ENCODE measurements at regions of chr22 and their contacts with region 1.

Region 1: DNA sequence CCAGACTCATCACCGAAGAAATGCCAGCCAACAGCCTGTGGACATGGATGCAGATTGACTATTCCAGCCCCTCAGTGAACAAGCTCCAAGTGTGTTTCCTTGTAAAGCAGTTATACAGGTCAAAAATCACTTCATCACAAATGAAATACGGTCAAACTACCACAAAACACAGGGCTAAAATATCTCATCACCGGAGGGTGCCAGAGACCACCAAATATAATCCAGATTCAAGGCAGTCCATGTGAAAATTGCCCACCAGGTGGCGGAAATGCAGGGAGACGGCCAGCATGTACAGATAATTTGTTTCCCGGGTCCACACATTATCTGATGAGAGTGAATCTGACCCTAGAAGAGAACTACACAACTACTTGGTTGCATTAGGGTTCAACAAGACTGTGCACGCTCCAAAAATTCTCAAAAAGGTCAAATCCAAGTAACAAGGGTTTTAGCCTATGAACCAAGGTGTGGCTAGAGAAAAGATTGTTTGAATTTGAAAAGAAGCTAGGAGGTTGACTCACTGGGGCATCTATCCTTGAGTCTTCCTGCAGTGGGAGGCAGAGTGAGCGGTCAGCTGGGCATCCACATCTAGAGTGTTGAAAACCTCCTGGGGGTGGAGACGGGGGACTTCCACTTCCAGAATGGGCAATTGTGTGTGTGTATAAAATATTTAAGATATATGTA is 71.7 kb downstream of the IGLL5 start:
- DNase-seq: peak; percentile 83
- H3K4me3 Mint-ChIP-seq: no peak overlapping the region
- H3K27ac Mint-ChIP-seq: no peak overlapping the region
- H3K4me1 Mint-ChIP-seq: peaks cover 6% of the 10 kb centered on the region
- H3K27me3 Mint-ChIP-seq: peaks cover 57% of the 10 kb centered on the region
- CTCF ChIP-seq: peak; percentile 78

Region 2: GRCh38 chr22:22440188-22440587 is 519.1 kb before region 1 on chr22:
- CTCF ChIA-PET with region 1: no interaction called
- intact Hi-C with region 1: no loop called
- DNase-seq: no peak
- H3K4me3 Mint-ChIP-seq: no peak overlapping the region
- H3K27ac Mint-ChIP-seq: no peak overlapping the region
- H3K4me1 Mint-ChIP-seq: no peaks in the 10 kb centered on the region
- H3K27me3 Mint-ChIP-seq: peaks cover 68% of the 10 kb centered on the region
- CTCF ChIP-seq: no peak

Region 3: DNA sequence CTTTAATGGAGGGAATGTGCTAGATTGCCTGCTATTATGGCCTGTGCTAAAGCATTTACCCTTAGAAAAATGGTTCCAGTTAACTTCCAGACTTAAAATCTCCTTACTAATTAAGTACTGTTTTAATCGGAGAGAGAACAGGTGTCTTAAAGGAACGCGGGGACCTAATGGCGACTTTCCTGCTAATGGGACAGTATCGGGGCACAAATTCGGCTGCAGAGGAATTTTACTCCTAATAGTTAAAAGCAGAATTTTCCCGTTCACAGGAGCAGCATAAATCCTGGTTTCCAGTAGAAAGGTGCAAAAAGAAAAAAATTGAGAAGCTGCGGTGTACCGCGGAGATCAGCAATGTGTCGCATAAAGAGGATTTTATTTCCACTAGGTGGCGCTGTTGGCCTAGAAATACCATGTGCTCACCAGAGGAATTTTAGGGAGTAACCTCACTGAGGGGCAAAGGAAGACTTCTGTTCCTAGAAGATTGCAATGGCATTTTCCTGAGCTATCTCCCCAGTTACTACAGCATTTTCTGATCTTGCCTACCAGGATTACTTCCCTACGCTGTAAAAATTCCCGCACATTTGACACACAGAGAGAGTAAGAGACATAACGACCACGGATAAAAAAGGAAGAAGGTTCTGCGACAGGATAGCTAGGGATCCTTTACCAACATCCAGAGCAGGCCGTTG is 495.3 kb before region 1 on chr22:
- CTCF ChIA-PET with region 1: no interaction called
- intact Hi-C with region 1: loop called (anchors 5 kb)
- DNase-seq: peak; percentile 59
- H3K4me3 Mint-ChIP-seq: no peak overlapping the region
- H3K27ac Mint-ChIP-seq: no peak overlapping the region
- H3K4me1 Mint-ChIP-seq: no peaks in the 10 kb centered on the region
- H3K27me3 Mint-ChIP-seq: peaks cover 76% of the 10 kb centered on the region
- CTCF ChIP-seq: peak; percentile 83

Region 4: GRCh38 chr22:22753526-22754267 is 205.6 kb before region 1 on chr22:
- CTCF ChIA-PET with region 1: interaction called, 15 read pairs
- intact Hi-C with region 1: no loop called
- DNase-seq: peak; percentile 91
- H3K4me3 Mint-ChIP-seq: no peak overlapping the region
- H3K27ac Mint-ChIP-seq: peak overlapping the region; percentile 53
- H3K4me1 Mint-ChIP-seq: peaks cover 19% of the 10 kb centered on the region
- H3K27me3 Mint-ChIP-seq: peaks cover 13% of the 10 kb centered on the region
- CTCF ChIP-seq: peak; percentile 76

Region 5: GRCh38 chr22:23122216-23122957 is 163.1 kb after region 1 on chr22:
- CTCF ChIA-PET with region 1: interaction called, 82 read pairs
- intact Hi-C with region 1: no loop called
- DNase-seq: no peak
- H3K4me3 Mint-ChIP-seq: no peak overlapping the region
- H3K27ac Mint-ChIP-seq: no peak overlapping the region
- H3K4me1 Mint-ChIP-seq: no peaks in the 10 kb centered on the region
- H3K27me3 Mint-ChIP-seq: no peaks in the 10 kb centered on the region
- CTCF ChIP-seq: no peak

Region 6: DNA sequence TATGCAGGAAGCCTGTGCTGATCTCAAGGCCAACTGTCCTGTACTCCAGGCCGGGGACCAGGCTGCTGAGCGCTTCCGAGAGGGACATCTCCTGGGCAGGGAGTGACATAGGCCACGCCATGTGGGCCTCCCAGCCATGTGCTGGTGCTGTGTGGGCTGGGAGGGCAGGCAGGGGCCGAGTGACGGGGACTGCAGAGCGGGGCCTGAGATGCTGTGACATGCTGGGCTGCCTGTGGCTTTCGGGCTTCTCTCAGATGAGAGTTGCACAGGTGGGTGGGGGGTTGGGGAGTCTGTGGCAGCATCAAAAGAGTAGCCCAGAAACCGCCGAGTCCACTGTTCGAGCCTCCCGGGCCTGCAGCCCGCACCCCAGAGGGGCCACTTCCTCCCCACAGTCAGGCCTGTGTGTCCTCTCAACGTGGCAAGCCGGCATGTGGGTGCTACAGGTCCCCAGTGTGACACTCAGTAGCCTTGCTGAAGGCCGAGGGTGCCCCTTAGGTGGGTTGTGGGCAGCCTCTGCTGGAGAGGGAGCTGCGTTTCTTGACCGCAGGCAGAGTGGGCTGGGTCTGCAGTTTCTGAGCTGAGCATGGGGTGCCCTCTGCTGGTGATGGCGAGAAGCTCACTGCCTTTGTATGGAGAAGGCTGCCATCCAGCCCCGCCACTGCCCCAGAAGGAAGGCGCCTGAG is 322.3 kb after region 1 on chr22:
- CTCF ChIA-PET with region 1: interaction called, 10 read pairs
- intact Hi-C with region 1: no loop called
- DNase-seq: peak; percentile 93
- H3K4me3 Mint-ChIP-seq: peak overlapping the region; percentile 48
- H3K27ac Mint-ChIP-seq: peak overlapping the region; percentile 92
- H3K4me1 Mint-ChIP-seq: peaks cover 38% of the 10 kb centered on the region
- H3K27me3 Mint-ChIP-seq: no peaks in the 10 kb centered on the region
- CTCF ChIP-seq: peak; percentile 93

Region 7: GRCh38 chr22:23539135-23539838 is 580.0 kb after region 1 on chr22:
- CTCF ChIA-PET with region 1: no interaction called
- intact Hi-C with region 1: loop called (anchors 5 kb)
- DNase-seq: peak; percentile 80
- H3K4me3 Mint-ChIP-seq: peak overlapping the region; percentile 39
- H3K27ac Mint-ChIP-seq: no peak overlapping the region
- H3K4me1 Mint-ChIP-seq: peaks cover 36% of the 10 kb centered on the region
- H3K27me3 Mint-ChIP-seq: peaks cover 8% of the 10 kb centered on the region
- CTCF ChIP-seq: peak; percentile 89